MCF 10A (cell line): ENCODE measurements at regions of chr12 and their contacts with region 1.

Region 1: DNA sequence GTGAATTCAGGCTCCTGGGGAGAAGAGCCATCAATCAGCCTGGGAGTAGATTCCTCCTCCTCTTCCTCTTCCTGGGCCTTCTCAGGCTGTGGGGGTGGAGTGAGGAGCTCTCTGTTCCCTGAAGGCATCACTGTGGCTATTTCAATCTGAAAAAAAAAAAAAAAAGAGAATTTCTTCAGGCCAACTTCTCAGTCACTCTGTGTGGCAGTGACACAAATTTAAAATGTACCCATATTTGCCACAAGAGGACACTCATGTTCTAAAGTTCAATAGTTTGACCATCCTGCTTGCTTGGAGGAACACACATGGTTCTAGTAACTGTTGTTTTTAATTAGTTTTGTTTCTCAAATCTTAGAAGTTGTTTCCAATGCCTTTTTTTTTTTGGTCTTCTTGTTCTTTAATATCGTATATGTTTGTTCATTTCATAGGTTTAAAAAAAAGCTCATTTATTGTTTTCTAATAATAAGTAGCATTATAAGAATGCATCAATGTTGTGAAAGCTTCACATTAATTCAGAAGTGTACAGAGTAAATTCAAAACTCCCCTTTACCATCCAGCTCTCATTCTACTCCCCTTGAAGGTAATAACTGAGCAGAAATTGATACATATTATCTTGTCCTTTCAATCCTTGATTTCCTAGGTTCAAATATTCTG is 23.3 kb upstream of the CCER1 start:
- DNase-seq: peak; percentile 63
- H3K4me3 Mint-ChIP-seq: no peak overlapping the region
- H3K27ac Mint-ChIP-seq: no peak overlapping the region
- H3K4me1 Mint-ChIP-seq: no peaks in the 10 kb centered on the region
- H3K27me3 Mint-ChIP-seq: peaks cover 15% of the 10 kb centered on the region
- CTCF ChIP-seq: peak; percentile 77

Region 2: DNA sequence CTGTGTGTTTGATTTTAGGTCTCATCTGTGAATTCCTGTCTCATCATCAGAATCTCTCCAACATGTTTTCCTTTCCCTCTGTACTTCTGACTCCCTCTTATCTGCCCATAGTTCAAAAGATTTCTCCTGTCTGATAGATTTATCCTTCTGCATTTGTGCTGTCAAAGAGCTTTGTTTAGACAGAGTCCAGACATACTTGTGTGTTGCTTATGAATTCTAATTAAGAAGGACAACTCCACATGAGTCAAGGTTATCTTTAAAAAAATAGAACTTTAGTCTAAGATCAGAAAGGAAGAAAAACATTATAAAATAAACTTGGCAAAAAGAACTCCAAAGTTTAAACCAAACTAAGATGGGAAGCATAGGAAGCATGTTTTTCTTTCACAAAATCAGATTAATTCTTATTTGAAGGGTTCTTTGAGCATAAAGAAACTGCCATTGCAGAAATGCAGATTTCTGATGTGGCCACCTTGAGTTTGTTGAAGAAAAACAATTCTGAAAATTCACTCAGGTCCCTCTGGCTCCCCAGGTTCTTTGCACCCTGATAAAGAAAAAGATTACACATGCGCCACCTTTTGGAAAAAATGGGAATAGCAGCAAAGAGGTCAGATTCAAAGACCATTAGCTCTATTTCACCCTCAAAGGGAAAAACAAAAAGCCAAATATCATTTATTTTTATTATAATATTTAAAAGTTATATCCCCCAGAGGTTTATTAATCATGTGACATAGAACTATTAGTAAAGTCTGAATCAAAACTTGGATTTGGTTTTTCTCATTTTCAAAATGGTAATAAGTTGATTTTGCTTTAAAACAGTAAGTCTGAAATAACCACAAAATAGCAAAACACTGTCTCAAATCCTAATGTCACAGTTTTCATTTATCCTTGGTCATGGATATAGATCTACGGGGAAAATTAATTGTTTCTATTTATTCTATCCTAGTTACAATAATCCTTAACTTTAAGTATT is 348.1 kb after region 1 on chr12:
- CTCF ChIA-PET with region 1: interaction called, 29 read pairs
- POLR2A ChIA-PET with region 1: interaction called, 3 read pairs
- intact Hi-C with region 1: loop called (anchors 1 kb)
- DNase-seq: peak; percentile 72
- H3K4me3 Mint-ChIP-seq: no peak overlapping the region
- H3K27ac Mint-ChIP-seq: no peak overlapping the region
- H3K4me1 Mint-ChIP-seq: no peaks in the 10 kb centered on the region
- H3K27me3 Mint-ChIP-seq: peaks cover 38% of the 10 kb centered on the region
- CTCF ChIP-seq: peak; percentile 67

Region 3: GRCh38 chr12:91335699-91336098 is 357.5 kb after region 1 on chr12:
- CTCF ChIA-PET with region 1: interaction called, 11 read pairs
- POLR2A ChIA-PET with region 1: no interaction called
- intact Hi-C with region 1: no loop called
- DNase-seq: no peak
- H3K4me3 Mint-ChIP-seq: no peak overlapping the region
- H3K27ac Mint-ChIP-seq: no peak overlapping the region
- H3K4me1 Mint-ChIP-seq: peaks cover 4% of the 10 kb centered on the region
- H3K27me3 Mint-ChIP-seq: peaks cover 74% of the 10 kb centered on the region
- CTCF ChIP-seq: no peak